ENCODE measurements at regions of chr6 and their contacts with region 1.

Region 1: GRCh38 chr6:40328405-40328987 is 258.7 kb downstream of the LRFN2 start:
- DNase-seq: no peak
- ATAC-seq: peak in 3 of 8 donors; percentile 50 to 61 (median 54)
- H3K4me3 ChIP-seq: no peak overlapping the region
- H3K27ac ChIP-seq: no peak overlapping the region
- H3K4me1 ChIP-seq: peaks cover 0 to 20% (median 6%) of the 10 kb centered on the region in 9 donors
- H3K27me3 ChIP-seq: peaks cover 0 to 63% (median 33%) of the 10 kb centered on the region in 7 donors
- CTCF ChIP-seq: peak in 8 of 9 donors; percentile 31 to 63 (median 48)

Region 2: DNA sequence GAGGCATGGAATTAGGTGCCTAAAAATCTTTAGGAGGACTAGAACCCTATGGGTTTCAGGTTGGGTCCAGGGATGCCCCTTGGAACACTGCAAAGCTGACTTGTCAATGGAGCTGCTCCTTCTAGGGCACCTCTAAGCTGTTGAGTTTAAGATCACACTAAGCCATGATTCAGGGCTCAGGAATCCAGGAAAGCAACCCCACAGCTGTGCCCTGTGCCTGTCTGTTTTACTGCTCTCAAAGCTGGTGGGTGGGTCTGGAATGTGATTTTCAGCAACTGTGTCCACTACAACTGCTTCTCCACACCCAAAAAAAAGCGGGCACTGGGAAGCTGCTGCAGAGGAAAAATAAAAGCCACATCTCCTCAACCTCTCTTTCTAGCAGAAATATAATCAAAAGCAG is 83.8 kb before region 1 on chr6:
- intact Hi-C with region 1: no loop called
- DNase-seq: no peak
- ATAC-seq: no peak
- H3K4me3 ChIP-seq: no peak overlapping the region
- H3K27ac ChIP-seq: no peak overlapping the region
- H3K4me1 ChIP-seq: no peaks in the 10 kb centered on the region
- H3K27me3 ChIP-seq: peaks cover 0 to 9% (median 0%) of the 10 kb centered on the region in 7 donors
- CTCF ChIP-seq: no peak

Region 3: DNA sequence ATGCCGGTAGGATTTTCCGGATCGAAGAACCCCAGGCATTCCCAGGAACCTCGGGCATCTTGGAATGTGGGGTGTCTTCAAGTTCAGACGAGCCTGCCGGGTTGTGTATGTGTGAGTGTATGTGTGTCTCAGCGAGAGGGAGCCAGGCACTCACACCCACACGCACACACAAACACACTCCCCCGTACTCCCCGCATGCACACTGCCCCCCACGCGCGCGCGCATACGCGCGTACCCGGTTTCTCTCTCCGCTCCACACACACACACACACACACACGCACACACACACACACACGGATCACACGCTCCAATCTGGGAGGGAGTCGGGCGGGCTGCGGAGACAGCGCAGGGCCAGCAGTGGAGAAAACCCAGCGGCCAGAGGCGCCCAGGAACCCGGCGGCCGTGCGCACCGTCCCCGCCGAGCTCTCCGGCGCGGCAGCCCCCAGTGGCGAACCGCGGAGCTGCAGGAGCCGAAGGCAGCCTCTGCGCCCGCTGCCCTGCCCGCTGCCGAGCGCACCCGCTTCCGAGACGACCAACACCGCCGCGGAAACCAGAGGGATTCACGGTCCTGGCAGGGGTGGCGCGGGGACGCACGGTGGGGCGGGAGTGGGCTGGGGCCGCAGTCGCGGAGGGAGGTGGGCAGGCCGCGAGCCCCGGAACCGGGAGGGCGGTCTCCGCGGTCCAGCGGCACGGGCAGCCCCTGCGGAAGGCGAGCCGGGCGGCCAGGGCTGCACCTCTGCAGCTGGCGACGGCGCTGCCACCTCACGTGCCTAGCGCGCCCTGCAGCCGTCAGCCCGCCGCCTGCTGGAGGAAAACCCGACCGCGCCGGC is 259.0 kb after region 1 on chr6 and contains the start of gene LRFN2:
- intact Hi-C with region 1: loop called in 7 of 10 experiments (anchors 5 to 10 kb)
- DNase-seq: peak; percentile 34 to 71
- ATAC-seq: peak; percentile 87 to 95 (median 90)
- H3K4me3 ChIP-seq: peak within 1 kb of the TSS in 9 of 10 donors; percentile 22 to 53 (median 43)
- H3K27ac ChIP-seq: peak within 1 kb of the TSS in 1 of 10 donors; percentile 15
- H3K4me1 ChIP-seq: peaks cover 0 to 20% (median 15%) of the 10 kb centered on the region in 9 donors
- H3K27me3 ChIP-seq: peaks cover 0 to 94% (median 83%) of the 10 kb centered on the region in 7 donors
- CTCF ChIP-seq: peak; percentile 19 to 71 (median 62)
- total RNA-seq, gene LRFN2: not detected

Region 4: DNA sequence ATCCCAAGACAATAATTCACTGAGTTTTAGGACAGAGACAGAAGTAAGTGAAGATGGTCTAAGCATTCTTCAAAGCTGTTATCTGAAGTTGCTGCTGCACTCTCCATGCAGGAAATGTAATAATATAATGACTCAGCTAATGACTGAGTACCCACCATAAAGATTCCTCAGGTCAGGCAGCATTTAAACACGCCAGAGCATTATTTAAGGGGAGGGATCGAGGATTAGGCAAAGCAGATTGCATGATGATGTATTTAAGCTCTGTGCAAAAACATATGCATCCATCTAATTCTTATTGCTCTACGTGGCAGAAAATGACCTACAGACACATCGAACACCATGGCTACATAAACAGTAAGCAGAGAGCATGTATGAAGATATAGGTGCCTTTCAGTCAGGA is 494.1 kb after region 1 on chr6:
- intact Hi-C with region 1: loop called in 1 of 10 experiments (anchors 10 kb)
- DNase-seq: no peak
- ATAC-seq: no peak
- H3K4me3 ChIP-seq: no peak overlapping the region
- H3K27ac ChIP-seq: no peak overlapping the region
- H3K4me1 ChIP-seq: peaks cover 0 to 9% (median 0%) of the 10 kb centered on the region in 9 donors
- H3K27me3 ChIP-seq: peaks cover 0 to 3% (median 0%) of the 10 kb centered on the region in 7 donors
- CTCF ChIP-seq: no peak

Region 5: DNA sequence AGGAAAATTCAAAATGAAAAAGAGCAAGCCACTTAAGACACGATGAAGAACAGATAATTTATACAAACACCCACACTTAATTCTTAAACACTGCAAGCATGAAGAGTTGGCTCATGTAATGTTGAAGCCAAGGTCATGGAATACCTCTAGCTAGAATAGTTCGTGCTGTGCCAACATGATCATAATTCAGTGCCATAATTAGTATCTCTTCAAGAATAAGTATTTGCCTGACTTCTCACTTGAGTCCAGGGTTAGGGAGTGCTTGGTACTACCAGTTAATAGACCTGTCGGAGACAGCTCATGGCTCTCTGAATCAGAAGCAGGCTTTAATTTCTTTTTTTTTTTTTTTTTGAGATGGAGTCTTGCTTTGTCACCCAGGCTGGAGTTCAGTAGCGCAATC is 504.2 kb after region 1 on chr6:
- intact Hi-C with region 1: loop called in 2 of 10 experiments (anchors 10 kb)
- DNase-seq: no peak
- ATAC-seq: peak in 4 of 8 donors; percentile 30 to 71 (median 42)
- H3K4me3 ChIP-seq: no peak overlapping the region
- H3K27ac ChIP-seq: no peak overlapping the region
- H3K4me1 ChIP-seq: no peaks in the 10 kb centered on the region
- H3K27me3 ChIP-seq: peaks cover 0 to 21% (median 13%) of the 10 kb centered on the region in 7 donors
- CTCF ChIP-seq: no peak

Region 6: GRCh38 chr6:40845553-40845952 is 517.1 kb after region 1 on chr6:
- intact Hi-C with region 1: loop called in 1 of 10 experiments (anchors 10 kb)
- DNase-seq: peak in 1 of 2 donors; percentile 35
- ATAC-seq: peak in 1 of 8 donors; percentile 29
- H3K4me3 ChIP-seq: no peak overlapping the region
- H3K27ac ChIP-seq: no peak overlapping the region
- H3K4me1 ChIP-seq: peaks cover 0 to 14% (median 0%) of the 10 kb centered on the region in 9 donors
- H3K27me3 ChIP-seq: peaks cover 0 to 28% (median 12%) of the 10 kb centered on the region in 7 donors
- CTCF ChIP-seq: peak; percentile 8 to 63 (median 52)

Measured in heart right ventricle (tissue), 16 donors.